ENCODE measurements at regions of chr3 and their contacts with region 1.

Region 1: DNA sequence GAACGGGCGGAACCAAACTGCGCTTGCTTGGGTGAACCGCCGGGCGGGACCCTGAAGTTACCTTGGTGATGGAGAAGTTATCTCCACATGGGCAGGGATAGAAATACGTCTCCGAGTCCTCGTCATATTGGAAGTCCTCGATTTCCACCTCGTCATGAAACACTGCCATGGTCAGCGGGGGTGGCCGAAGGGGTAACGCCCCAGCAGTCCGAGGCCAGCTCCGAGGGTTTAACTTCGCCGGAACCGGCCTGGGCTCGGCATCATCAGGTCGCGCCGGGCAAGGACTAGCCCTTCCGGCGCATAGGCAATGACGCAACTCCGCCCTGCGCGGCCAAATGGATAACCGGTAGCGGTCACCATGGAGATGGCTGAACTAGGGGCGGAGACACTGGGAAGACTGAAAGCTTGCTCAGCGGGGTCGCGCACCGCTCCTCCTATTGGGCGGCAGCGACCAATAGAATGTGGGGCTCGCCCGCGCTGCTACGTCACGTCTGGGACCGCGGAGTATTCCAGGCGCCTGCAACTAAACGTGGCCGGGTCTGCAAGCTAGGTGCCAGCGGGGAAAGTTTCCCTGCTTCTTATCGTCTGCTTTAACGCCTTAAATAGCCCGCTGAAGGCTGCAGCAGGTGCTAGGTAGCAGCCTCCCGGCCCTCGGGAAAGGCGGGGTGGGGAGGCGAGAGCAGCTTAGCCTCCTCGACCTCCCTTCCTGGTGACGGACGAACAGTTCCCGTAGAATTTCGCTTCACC is at the starts of genes DPH3 and OXNAD1:
- DNase-seq: peak; percentile 95
- ATAC-seq: peak; percentile 98
- H3K4me3 ChIP-seq: peak within 1 kb of the TSS; percentile 91
- H3K27ac ChIP-seq: peak within 1 kb of the TSS; percentile 86
- H3K4me1 ChIP-seq: peaks cover 3% of the 10 kb centered on the region
- H3K27me3 ChIP-seq: no peaks in the 10 kb centered on the region
- CTCF ChIP-seq: no peak
- EP300 ChIP-seq: no peak
- POLR2A ChIP-seq: peak; percentile 58
- RAD21 ChIP-seq: no peak
- polyA plus RNA-seq, gene DPH3: 67.1 to 71.8 TPM
- polyA plus RNA-seq, gene OXNAD1: 5.6 to 6.9 TPM

Region 2: GRCh38 chr3:16060358-16060852 is 204.5 kb before region 1 on chr3:
- CTCF ChIA-PET with region 1: no interaction called
- POLR2A ChIA-PET with region 1: no interaction called
- RAD21 ChIA-PET with region 1: no interaction called
- SMC1A ChIA-PET with region 1: no interaction called
- in situ Hi-C with region 1: no loop called
- intact Hi-C with region 1: no loop called
- DNase-seq: no peak
- ATAC-seq: no peak
- H3K4me3 ChIP-seq: no peak overlapping the region
- H3K27ac ChIP-seq: no peak overlapping the region
- H3K4me1 ChIP-seq: no peaks in the 10 kb centered on the region
- H3K27me3 ChIP-seq: no peaks in the 10 kb centered on the region
- CTCF ChIP-seq: no peak
- EP300 ChIP-seq: no peak
- POLR2A ChIP-seq: no peak
- RAD21 ChIP-seq: no peak

Region 3: GRCh38 chr3:16253601-16254000 is 11.3 kb before region 1 on chr3:
- CTCF ChIA-PET with region 1: interaction called, 35 read pairs
- POLR2A ChIA-PET with region 1: interaction called, 15 read pairs
- RAD21 ChIA-PET with region 1: interaction called, 8 read pairs
- SMC1A ChIA-PET with region 1: interaction called, 43 read pairs
- in situ Hi-C with region 1: no loop called
- intact Hi-C with region 1: no loop called
- DNase-seq: no peak
- ATAC-seq: no peak
- H3K4me3 ChIP-seq: no peak overlapping the region
- H3K27ac ChIP-seq: no peak overlapping the region
- H3K4me1 ChIP-seq: peaks cover 8% of the 10 kb centered on the region; the same call in 1 of the 2 replicates
- H3K27me3 ChIP-seq: no peaks in the 10 kb centered on the region
- CTCF ChIP-seq: no peak
- EP300 ChIP-seq: no peak
- POLR2A ChIP-seq: no peak
- RAD21 ChIP-seq: no peak

Region 4: GRCh38 chr3:16319307-16319706 is 54.4 kb after region 1 on chr3:
- CTCF ChIA-PET with region 1: interaction called, 23 read pairs
- POLR2A ChIA-PET with region 1: interaction called, 3 read pairs
- RAD21 ChIA-PET with region 1: no interaction called
- SMC1A ChIA-PET with region 1: interaction called, 4 read pairs
- in situ Hi-C with region 1: no loop called
- intact Hi-C with region 1: no loop called
- DNase-seq: no peak
- ATAC-seq: peak; percentile 76
- H3K4me3 ChIP-seq: no peak overlapping the region
- H3K27ac ChIP-seq: no peak overlapping the region
- H3K4me1 ChIP-seq: no peaks in the 10 kb centered on the region
- H3K27me3 ChIP-seq: no peaks in the 10 kb centered on the region
- CTCF ChIP-seq: peak; percentile 31 to 51 (median 40); a peak in 5 of 6 replicates
- EP300 ChIP-seq: no peak
- POLR2A ChIP-seq: no peak
- RAD21 ChIP-seq: peak; percentile 30; the same call in 1 of the 2 replicates

Region 5: DNA sequence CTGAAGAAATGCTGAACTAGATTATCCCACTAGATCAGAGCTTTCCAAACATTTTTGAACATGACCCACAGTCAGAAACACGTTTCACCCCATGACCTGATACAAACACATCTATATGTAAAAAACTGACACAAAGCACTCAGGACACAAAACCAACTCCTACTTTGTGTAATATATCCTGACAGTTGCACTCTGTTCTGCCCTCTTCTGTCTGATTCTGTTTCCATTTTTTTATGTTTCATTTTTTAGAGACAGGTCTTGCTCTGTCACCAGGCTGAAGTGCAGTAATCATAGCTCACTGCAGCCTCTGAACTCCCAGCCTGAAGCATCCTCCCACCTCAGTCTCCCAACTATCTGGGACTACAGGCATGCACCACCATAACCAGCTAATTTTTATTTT is 264.4 kb after region 1 on chr3:
- CTCF ChIA-PET with region 1: interaction called, 12 read pairs
- POLR2A ChIA-PET with region 1: no interaction called
- RAD21 ChIA-PET with region 1: interaction called, 3 read pairs
- SMC1A ChIA-PET with region 1: interaction called, 5 read pairs
- in situ Hi-C with region 1: no loop called
- intact Hi-C with region 1: no loop called
- DNase-seq: no peak
- ATAC-seq: peak; percentile 72
- H3K4me3 ChIP-seq: no peak overlapping the region
- H3K27ac ChIP-seq: no peak overlapping the region
- H3K4me1 ChIP-seq: no peaks in the 10 kb centered on the region
- H3K27me3 ChIP-seq: no peaks in the 10 kb centered on the region
- CTCF ChIP-seq: peak in 2 of 3 experiments; percentile 22 to 24; a peak in 3 of 6 replicates
- EP300 ChIP-seq: no peak
- POLR2A ChIP-seq: no peak
- RAD21 ChIP-seq: peak; percentile 49

Measured in GM12878 (cell line).